ENCODE measurements at regions of chr14 and their contacts with region 1.

Region 1: DNA sequence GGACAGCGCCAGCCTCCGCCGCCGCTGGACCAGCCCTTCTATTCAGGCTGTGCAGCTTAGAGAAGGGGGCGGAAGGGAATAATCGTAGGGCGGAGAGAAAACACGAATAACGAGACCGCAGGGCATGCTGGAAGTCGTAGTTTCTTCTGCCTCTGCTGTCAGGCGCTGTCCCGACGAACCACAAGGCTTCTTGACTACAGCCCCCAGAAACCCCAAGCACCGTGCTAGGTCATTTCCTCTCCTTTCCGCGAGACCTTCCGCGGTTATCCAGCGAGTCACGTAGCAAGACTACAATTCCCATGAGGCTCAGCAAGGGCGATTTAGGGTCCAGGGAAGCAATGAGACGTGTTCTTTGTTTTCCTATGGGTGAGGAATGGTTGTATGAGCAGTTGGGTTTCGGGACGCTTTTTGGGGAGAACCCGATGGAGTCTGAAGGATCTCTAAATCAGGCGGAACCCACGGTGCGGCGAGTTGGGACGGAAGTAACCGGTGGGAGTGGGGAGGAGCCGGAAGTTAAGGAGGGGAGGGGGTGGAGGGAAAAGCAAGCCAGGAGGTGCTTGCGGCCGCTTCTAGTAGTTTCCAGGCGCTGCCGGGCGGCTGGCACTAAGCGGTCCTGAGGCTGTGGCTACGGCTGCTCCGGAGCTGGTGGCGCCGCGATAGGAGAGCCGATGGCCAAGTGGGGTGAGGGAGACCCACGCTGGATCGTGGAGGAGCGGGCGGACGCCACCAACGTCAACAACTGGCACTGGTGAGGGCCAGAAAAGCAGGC is at the starts of genes AHSA1 and VIPAS39:
- DNase-seq: peak; percentile 93
- ATAC-seq: peak; percentile 99
- total RNA-seq, gene AHSA1: 231 TPM
- total RNA-seq, gene VIPAS39: 12.6 TPM

Region 2: GRCh38 chr14:77409131-77409533 is 48.6 kb before region 1 on chr14:
- intact Hi-C with region 1: no loop called
- DNase-seq: no peak
- ATAC-seq: no peak

Region 3: GRCh38 chr14:77554207-77554606 is 96.5 kb after region 1 on chr14:
- intact Hi-C with region 1: loop called (anchors 10 kb)
- DNase-seq: no peak
- ATAC-seq: no peak